ENCODE measurements at regions of chr4 and their contacts with region 1.

Region 1: DNA sequence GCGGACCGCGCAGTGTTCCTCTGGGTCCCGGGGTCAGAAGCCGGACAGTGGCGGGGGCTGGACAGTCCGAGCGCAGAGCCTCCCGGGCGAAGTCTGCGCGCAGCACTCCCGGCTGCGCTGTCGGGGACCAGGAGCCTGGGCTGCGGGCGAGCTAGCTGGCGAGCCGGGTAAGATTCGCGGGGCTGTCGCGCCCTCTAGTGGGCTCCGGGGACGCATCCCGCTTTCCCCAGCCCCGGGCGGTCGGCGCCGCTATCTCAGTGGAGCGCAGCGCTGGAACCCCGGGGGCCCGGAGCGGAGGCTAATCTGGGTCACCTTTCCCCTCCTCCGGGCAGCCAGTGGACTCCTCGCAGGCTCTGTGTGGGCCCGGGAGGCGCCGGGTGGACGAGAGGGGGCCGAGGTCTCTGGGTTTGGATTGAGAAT is 4.2 kb downstream of the PDGFRA start:
- DNase-seq: peak; percentile 64 to 82
- ATAC-seq: peak; percentile 83 to 85 (median 84)
- H3K4me3 ChIP-seq: peak overlapping the region; percentile 15
- H3K4me3 Mint-ChIP-seq: peak overlapping the region; percentile 82
- H3K27ac ChIP-seq: no peak overlapping the region
- H3K27ac Mint-ChIP-seq: no peak overlapping the region
- H3K4me1 ChIP-seq: peaks cover 32% of the 10 kb centered on the region
- H3K4me1 Mint-ChIP-seq: peaks cover 11 to 20% of the 10 kb centered on the region in 2 donors
- H3K27me3 ChIP-seq: peaks cover 33% of the 10 kb centered on the region
- H3K27me3 Mint-ChIP-seq: peaks cover 46% of the 10 kb centered on the region in 2 donors
- CTCF ChIP-seq: peak; percentile 62

Region 2: GRCh38 chr4:52545099-52546069 is 1687.9 kb before region 1 on chr4:
- intact Hi-C with region 1: loop called (anchors 5 kb)
- DNase-seq: peak; percentile 40 to 73
- ATAC-seq: peak; percentile 49 to 80 (median 60)
- H3K4me3 ChIP-seq: no peak overlapping the region
- H3K4me3 Mint-ChIP-seq: no peak overlapping the region
- H3K27ac ChIP-seq: no peak overlapping the region
- H3K27ac Mint-ChIP-seq: no peak overlapping the region
- H3K4me1 ChIP-seq: no peaks in the 10 kb centered on the region
- H3K4me1 Mint-ChIP-seq: peaks cover 0 to 6% of the 10 kb centered on the region in 2 donors
- H3K27me3 ChIP-seq: no peaks in the 10 kb centered on the region
- H3K27me3 Mint-ChIP-seq: peaks cover 0 to 20% of the 10 kb centered on the region in 2 donors
- CTCF ChIP-seq: peak; percentile 68

Region 3: DNA sequence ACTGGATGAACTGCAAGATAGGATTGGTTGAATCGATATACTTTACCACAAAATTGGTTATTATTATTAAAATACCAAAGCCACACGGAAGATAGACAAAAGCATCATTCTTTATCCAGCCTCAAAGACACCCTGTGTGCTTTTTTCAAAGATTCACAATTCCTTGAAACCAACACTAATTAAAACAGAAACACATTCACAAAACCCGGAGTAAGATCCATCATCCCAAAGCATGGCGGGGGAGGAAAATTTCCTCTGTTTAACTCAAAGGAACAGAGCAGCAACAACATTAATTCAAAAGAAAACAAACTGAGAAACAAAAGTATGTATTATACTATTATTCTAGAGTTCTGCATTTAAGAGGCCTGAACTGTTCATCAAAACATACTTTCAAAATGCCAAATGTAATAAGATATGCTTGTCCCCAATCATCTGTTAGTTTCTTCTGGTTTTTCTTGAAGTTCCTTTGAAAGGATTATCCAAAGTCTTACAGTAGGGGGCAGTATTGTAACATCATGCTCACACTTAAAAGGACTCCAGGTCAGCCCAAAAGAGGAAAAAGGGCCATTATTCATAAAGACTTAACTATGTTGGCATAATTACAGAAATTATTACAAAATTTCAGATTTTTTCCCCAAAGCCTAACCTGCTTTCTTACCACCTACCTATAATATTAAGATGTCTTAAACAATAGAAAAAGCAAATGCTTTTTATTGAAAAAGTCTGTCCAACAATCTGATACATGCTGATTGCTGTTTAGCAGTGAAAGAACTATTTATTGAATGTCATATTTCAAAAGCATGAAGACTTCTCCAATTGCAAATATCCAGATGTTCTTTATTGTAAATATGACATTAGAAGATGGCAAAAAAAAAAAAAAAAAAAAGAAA is 1036.2 kb before region 1 on chr4:
- intact Hi-C with region 1: loop called (anchors 1 kb)
- DNase-seq: peak in 1 of 2 donors; percentile 74
- ATAC-seq: peak in 1 of 3 donors; percentile 62
- H3K4me3 ChIP-seq: no peak overlapping the region
- H3K4me3 Mint-ChIP-seq: no peak overlapping the region
- H3K27ac ChIP-seq: no peak overlapping the region
- H3K27ac Mint-ChIP-seq: no peak overlapping the region
- H3K4me1 ChIP-seq: no peaks in the 10 kb centered on the region
- H3K4me1 Mint-ChIP-seq: no peaks in the 10 kb centered on the region
- H3K27me3 ChIP-seq: no peaks in the 10 kb centered on the region
- H3K27me3 Mint-ChIP-seq: no peaks in the 10 kb centered on the region
- CTCF ChIP-seq: peak; percentile 71

Region 4: DNA sequence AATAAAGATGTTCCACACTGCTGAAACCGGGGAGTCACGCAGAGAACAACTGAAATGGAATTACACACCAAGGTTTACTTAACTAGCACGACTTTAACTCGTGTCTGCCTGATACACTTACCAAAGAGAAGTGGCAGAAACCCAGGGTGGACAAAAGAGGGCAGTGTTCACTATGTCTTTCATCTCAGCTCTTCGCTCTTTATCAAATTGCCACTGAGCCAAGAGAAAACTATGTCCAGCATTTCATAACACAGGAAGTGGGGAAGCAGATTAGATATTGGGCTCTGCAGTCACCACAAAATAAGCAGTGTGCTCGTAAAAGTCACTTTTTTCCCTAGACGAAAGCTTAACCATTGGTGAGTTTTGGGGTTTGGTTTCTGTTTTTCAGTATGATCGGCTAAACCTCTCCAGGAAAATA is 324.6 kb before region 1 on chr4:
- intact Hi-C with region 1: loop called (anchors 5 kb)
- DNase-seq: peak in 1 of 2 donors; percentile 52
- ATAC-seq: peak in 2 of 3 donors; percentile 64 to 85
- H3K4me3 ChIP-seq: no peak overlapping the region
- H3K4me3 Mint-ChIP-seq: no peak overlapping the region
- H3K27ac ChIP-seq: no peak overlapping the region
- H3K27ac Mint-ChIP-seq: no peak overlapping the region
- H3K4me1 ChIP-seq: peaks cover 3% of the 10 kb centered on the region
- H3K4me1 Mint-ChIP-seq: peaks cover 16 to 23% of the 10 kb centered on the region in 2 donors
- H3K27me3 ChIP-seq: peaks cover 14% of the 10 kb centered on the region
- H3K27me3 Mint-ChIP-seq: peaks cover 29 to 53% of the 10 kb centered on the region in 2 donors
- CTCF ChIP-seq: peak; percentile 49

Measured in natural killer cell (primary cell).